H1 (cell line): ENCODE measurements at regions of chr6 and their contacts with region 1.

Region 1: GRCh38 chr6:129730477-129731165 is 20.6 kb upstream of the ARHGAP18 start:
- DNase-seq: no peak
- H3K4me3 ChIP-seq: no peak overlapping the region
- H3K27ac ChIP-seq: no peak overlapping the region
- H3K4me1 ChIP-seq: peaks cover 0 to 3% (median 0%) of the 10 kb centered on the region in 4 experiments; a peak in 1 of 7 replicates
- H3K27me3 ChIP-seq: no peaks in the 10 kb centered on the region
- CTCF ChIP-seq: peak in 2 of 3 experiments; percentile 42 to 46; a peak in 3 of 4 replicates
- EP300 ChIP-seq: no peak
- POLR2A ChIP-seq: no peak
- RAD21 ChIP-seq: peak; percentile 74 to 77

Region 2: DNA sequence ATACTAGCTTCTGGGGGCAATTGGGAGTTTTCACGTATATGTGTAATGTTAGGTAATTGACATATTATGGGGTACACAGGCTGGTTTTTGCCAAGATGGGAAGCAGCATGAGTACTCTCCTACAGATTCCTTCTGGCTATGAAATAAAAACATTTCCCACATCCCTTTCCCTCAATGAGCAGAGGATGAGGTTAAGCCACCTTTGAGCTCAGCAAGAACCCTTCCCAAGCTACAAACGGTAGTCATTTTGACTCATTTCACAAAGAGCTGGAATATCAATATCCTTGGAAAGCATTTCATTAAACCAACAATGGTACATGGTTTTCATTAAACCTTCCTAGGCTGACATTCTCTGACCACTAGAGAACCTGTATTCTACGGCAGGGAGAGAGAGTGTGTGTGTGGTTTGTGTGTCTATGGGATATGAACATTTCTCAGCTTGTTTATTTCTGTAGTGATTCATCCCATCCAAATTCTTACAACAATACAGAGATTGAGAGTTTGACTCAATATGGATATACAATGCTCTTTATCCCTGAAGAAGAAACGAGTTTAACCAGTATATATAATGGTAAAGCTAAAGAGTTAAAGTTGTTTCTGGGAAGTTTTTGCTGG is 140.1 kb before region 1 on chr6:
- CTCF ChIA-PET with region 1: interaction called, 16 read pairs
- POLR2A ChIA-PET with region 1: no interaction called
- DNase-seq: no peak
- H3K4me3 ChIP-seq: no peak overlapping the region
- H3K27ac ChIP-seq: no peak overlapping the region
- H3K4me1 ChIP-seq: no peaks in the 10 kb centered on the region
- H3K27me3 ChIP-seq: no peaks in the 10 kb centered on the region
- CTCF ChIP-seq: no peak
- EP300 ChIP-seq: no peak
- POLR2A ChIP-seq: no peak
- RAD21 ChIP-seq: no peak

Region 3: DNA sequence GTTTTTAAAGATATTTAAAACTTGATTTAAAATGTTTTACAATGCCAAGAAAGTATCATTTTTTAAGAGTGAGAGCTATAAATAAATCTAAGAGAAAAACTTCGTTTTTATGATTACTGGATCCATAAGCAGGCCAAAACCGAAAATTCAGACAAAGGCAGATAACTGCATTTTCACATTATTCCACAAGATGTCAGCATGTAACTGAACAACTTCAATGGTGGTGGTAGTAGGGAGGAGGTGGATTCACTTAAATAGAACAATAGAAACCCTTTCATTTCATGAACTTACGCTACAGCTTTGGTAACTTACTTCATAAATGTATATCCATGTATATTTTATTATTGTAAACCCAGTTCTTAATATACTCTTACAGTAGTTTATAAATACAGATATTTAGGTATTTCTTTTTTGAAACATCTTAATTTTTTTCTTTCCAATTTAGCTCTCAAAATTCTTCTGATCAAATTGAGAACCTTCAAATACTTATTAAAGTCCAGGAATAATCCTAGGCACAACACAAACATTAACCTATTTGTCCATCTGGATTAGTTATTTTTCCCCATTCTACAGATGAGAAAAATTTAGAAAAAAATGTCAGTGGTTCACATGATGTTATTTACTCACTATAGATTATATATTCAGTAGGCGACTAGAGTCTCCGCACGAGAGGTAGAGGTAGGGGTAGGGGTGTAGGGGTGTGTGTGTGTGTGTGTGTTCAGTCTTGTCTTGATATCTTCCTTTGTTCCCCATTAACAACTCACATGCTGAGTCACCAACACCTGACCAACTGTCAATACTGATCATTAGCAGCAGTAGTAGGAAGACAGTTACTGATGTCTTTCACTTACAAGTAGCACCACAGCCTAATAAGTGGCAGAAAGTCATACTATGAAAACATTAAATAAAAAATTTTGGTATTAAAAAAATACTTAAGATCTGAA is 132.1 kb before region 1 on chr6:
- CTCF ChIA-PET with region 1: interaction called, 89 read pairs
- POLR2A ChIA-PET with region 1: no interaction called
- DNase-seq: no peak
- H3K4me3 ChIP-seq: no peak overlapping the region
- H3K27ac ChIP-seq: no peak overlapping the region
- H3K4me1 ChIP-seq: peaks cover 0 to 3% (median 0%) of the 10 kb centered on the region in 4 experiments; a peak in 1 of 7 replicates
- H3K27me3 ChIP-seq: no peaks in the 10 kb centered on the region
- CTCF ChIP-seq: peak in 2 of 3 experiments; percentile 68 to 72; a peak in 3 of 4 replicates
- EP300 ChIP-seq: no peak
- POLR2A ChIP-seq: no peak
- RAD21 ChIP-seq: peak; percentile 95 to 96

Region 4: GRCh38 chr6:129709769-129710449 is 20.7 kb before region 1 on chr6 and contains the start of gene ARHGAP18:
- CTCF ChIA-PET with region 1: interaction called, 16 read pairs
- POLR2A ChIA-PET with region 1: no interaction called
- DNase-seq: peak; percentile 70 to 86
- H3K4me3 ChIP-seq: peak within 1 kb of the TSS; percentile 46 to 68 (median 56)
- H3K27ac ChIP-seq: no peak within 1 kb of the TSS
- H3K4me1 ChIP-seq: peaks cover 0 to 9% (median under 1%) of the 10 kb centered on the region in 4 experiments; a peak in 1 of 7 replicates
- H3K27me3 ChIP-seq: no peaks in the 10 kb centered on the region; a peak in 1 of 7 replicates
- CTCF ChIP-seq: no peak
- EP300 ChIP-seq: peak in 1 of 2 experiments; percentile 15; a peak in 1 of 3 replicates
- POLR2A ChIP-seq: no peak; a peak in 1 of 3 replicates
- RAD21 ChIP-seq: 0 out of 4 replicates have a peak, but pooled peaks of 1 of the 2 experiments have one; percentile 4
- total RNA-seq, gene ARHGAP18: 4.2 and 4.5 TPM in 2 replicates

Region 5: DNA sequence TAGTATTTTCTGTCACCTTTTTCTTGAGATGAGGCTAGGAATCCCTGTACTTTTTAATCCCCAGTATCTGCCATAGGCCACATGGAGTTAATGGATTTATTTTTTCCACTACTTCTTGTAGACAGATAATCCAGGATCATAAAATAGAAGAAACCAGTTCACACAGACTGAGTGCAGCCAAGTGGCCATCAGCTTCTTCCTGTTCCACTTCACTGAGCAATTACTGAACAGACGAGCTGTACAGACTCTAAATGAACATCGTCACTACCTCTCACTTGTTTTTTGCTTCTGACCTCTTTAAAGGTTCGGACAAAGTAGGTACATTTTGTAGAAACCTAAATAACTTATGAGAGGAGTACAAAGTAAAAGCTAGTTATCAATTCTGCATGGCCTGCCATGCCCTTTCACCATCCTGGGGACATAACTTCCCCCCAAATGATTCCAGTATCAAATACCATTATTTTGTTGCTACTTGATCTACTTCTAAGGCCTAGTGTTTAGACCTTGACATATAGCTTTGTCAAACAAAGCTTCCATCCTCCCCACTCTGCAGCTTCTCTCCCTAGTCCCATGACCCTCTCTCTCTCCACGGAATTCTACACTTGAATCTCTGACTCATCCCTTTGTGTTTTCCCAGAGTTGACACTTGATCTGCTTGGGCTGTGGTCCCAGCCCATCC is 13.7 kb after region 1 on chr6:
- CTCF ChIA-PET with region 1: interaction called, 40 read pairs
- POLR2A ChIA-PET with region 1: no interaction called
- DNase-seq: no peak
- H3K4me3 ChIP-seq: no peak overlapping the region
- H3K27ac ChIP-seq: no peak overlapping the region
- H3K4me1 ChIP-seq: no peaks in the 10 kb centered on the region
- H3K27me3 ChIP-seq: no peaks in the 10 kb centered on the region
- CTCF ChIP-seq: no peak
- EP300 ChIP-seq: no peak
- POLR2A ChIP-seq: no peak
- RAD21 ChIP-seq: no peak

Region 6: DNA sequence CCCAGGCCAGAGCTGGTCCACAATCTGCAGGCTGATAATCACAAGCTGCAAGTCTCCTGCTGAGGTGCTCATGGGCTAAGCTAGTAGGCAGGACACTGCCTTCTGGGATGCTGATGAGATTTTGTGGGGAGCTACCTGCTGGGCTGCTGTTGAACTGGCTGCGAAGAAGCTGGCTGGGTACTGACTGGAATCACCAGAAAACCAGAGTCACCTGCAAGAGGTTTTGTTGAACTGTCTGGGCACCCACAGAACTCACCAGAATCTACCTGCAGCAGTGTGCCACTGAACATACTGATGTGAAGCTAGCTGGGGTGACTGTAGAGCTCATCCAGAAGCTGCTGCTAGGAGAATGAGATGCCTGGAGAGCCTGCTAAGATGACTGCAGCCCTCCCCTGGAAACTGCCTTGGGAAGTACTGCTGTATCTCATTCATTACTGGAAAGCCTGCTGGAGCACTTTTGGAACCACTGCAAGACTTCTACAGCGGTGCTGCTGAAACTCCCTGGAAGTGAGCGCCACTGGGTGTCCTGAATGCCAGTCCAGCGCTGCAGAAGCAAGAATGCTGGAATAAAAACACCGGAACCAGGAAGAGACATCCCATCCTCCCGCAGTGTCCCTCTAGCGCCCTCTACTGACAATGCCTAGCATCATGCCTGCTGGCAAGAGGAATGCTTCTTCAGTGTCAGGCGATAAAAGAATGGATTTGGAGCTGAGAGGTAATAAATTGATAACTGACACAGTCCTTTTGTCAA is 44.3 kb after region 1 on chr6:
- CTCF ChIA-PET with region 1: interaction called, 18 read pairs
- POLR2A ChIA-PET with region 1: no interaction called
- DNase-seq: peak; percentile 54 to 85
- H3K4me3 ChIP-seq: peak overlapping the region in 3 of 4 experiments; percentile 22 to 43 (median 34); a peak in 4 of 8 replicates
- H3K27ac ChIP-seq: no peak overlapping the region
- H3K4me1 ChIP-seq: peaks cover 0 to 4% (median 2%) of the 10 kb centered on the region in 4 experiments; a peak in 3 of 7 replicates
- H3K27me3 ChIP-seq: no peaks in the 10 kb centered on the region
- CTCF ChIP-seq: peak; percentile 86 to 99 (median 95)
- EP300 ChIP-seq: no peak
- POLR2A ChIP-seq: no peak
- RAD21 ChIP-seq: peak; percentile 81 to 89